MCF 10A (cell line): ENCODE measurements at regions of chr6 and their contacts with region 1.

Region 1: GRCh38 chr6:35688581-35689322 is at the start of gene FKBP5:
- DNase-seq: peak; percentile 91
- H3K4me3 Mint-ChIP-seq: peak within 1 kb of the TSS; percentile 97
- H3K27ac Mint-ChIP-seq: peak within 1 kb of the TSS; percentile 95
- H3K4me1 Mint-ChIP-seq: peaks cover 21% of the 10 kb centered on the region
- H3K27me3 Mint-ChIP-seq: no peaks in the 10 kb centered on the region
- CTCF ChIP-seq: no peak
- total RNA-seq, gene FKBP5: 304 and 387 TPM in 2 replicates

Region 2: DNA sequence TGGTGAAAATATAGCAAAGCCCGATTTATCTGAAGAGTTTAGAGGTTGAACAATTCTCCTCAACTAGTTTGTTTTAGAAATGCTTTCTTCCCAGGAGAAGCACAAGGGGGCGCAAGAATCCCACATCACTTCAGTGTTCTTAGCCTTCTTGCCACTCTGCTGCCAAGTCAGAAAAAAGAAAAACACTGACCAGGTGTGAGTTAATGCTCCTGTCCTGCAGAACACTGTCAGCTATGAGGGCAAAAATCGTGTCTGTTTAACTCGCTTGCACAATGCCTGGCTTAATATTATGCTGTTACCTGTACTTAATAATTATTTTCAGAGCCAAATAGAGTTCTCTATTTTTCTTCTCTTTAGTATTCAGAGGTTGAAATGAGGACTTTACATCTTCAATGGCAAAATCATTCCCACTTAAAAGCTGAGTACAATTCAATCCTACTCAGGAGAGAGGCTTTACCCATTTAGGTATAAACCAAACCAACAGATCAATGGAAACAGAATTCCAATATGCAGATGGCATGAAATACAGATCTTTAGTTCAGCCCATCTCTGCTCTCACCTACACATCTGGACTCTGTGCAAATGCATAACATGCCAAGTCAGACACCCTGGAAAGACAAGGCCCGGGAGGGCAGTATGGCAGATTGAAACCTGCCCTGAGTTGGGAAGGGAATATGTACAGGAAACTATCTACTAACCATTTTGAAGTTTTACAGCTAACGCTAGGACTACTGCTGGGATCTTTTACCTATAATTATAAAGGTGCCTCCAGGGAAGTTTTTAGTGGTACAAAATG is 104.7 kb before region 1 on chr6:
- CTCF ChIA-PET with region 1: interaction called, 3 read pairs
- POLR2A ChIA-PET with region 1: interaction called, 4 read pairs
- intact Hi-C with region 1: loop called (anchors 1 kb)
- DNase-seq: peak; percentile 82
- H3K4me3 Mint-ChIP-seq: no peak overlapping the region
- H3K27ac Mint-ChIP-seq: peak overlapping the region; percentile 75
- H3K4me1 Mint-ChIP-seq: peaks cover 40% of the 10 kb centered on the region
- H3K27me3 Mint-ChIP-seq: no peaks in the 10 kb centered on the region
- CTCF ChIP-seq: peak; percentile 65

Region 3: GRCh38 chr6:35601331-35602132 is 87.2 kb before region 1 on chr6:
- CTCF ChIA-PET with region 1: no interaction called
- POLR2A ChIA-PET with region 1: interaction called, 137 read pairs
- intact Hi-C with region 1: loop called (anchors 5 kb)
- DNase-seq: peak; percentile 92
- H3K4me3 Mint-ChIP-seq: peak overlapping the region; percentile 58
- H3K27ac Mint-ChIP-seq: peak overlapping the region; percentile 96
- H3K4me1 Mint-ChIP-seq: peaks cover 63% of the 10 kb centered on the region
- H3K27me3 Mint-ChIP-seq: no peaks in the 10 kb centered on the region
- CTCF ChIP-seq: no peak

Region 4: DNA sequence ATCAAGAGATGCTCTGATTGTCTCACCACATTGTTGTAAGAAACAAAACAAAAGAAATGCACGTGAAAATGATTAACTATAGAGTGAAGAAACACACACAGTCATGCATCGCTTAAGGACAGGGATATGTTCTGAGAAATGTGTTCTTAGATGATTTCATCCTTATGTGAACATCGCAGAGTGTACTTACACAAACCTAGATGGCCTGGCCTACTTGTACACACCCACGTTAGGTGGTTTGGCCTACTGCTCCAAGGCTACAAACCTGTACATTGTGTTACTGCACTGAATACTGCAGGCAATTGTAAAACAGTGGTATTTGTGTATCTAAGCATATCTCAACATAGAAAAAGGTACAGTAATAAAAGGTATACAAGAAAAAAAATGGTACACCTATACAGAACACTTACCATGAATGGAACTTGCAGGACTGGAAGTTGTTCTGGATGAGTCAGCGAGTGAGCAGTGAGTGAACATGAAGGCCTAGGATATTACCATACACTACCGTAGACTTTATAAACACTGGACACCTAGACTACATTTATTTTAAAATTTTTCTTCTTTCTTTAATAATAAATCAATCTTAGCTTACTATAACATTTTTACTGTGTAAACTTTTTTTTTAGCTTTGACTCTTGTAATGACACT is 48.6 kb before region 1 on chr6:
- CTCF ChIA-PET with region 1: no interaction called
- POLR2A ChIA-PET with region 1: interaction called, 12 read pairs
- intact Hi-C with region 1: no loop called
- DNase-seq: no peak
- H3K4me3 Mint-ChIP-seq: no peak overlapping the region
- H3K27ac Mint-ChIP-seq: peak overlapping the region; percentile 19
- H3K4me1 Mint-ChIP-seq: peaks cover 37% of the 10 kb centered on the region
- H3K27me3 Mint-ChIP-seq: no peaks in the 10 kb centered on the region
- CTCF ChIP-seq: no peak

Region 5: DNA sequence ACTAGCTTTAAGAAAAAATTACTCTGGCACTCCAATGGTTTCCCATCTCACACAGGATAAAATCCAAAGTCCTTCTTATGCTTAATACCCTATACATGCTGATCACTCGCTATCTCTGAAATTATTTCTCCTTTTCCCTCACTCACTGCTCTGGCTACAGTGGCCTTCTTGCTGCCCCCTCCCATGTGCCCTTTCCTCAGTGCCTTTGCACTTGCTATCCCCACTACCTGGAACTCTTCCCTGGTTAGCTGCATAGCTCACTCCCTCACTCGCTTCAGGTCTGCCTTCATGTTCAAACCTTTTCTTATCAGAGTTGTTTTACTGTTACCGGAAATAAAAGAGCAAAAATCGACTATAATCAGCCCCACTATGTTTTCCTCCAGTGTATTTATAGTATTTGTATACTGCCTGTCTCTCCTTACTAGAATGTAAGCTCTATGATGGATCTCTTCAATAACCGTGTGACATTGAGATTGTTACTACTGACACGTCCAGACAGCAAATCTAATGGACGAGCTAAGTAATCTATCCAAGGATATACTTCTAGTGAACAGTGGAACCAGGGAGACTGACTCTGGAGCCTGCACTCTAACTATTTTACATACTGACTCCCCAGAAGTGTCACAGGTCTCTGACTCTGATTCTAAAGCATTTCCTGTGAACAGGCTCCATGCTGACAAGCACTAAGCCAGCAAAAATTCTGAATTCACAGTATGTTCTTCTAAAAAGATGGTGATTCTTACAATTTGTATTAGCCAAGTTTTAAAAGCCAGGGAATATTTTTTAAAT is 25.1 kb before region 1 on chr6:
- CTCF ChIA-PET with region 1: interaction called, 4 read pairs
- POLR2A ChIA-PET with region 1: interaction called, 285 read pairs
- intact Hi-C with region 1: no loop called
- DNase-seq: peak; percentile 29
- H3K4me3 Mint-ChIP-seq: no peak overlapping the region
- H3K27ac Mint-ChIP-seq: no peak overlapping the region
- H3K4me1 Mint-ChIP-seq: peaks cover 10% of the 10 kb centered on the region
- H3K27me3 Mint-ChIP-seq: no peaks in the 10 kb centered on the region
- CTCF ChIP-seq: no peak

Region 6: GRCh38 chr6:35669451-35670045 is 19.2 kb before region 1 on chr6:
- CTCF ChIA-PET with region 1: interaction called, 3 read pairs
- POLR2A ChIA-PET with region 1: interaction called, 285 read pairs
- intact Hi-C with region 1: no loop called
- DNase-seq: no peak
- H3K4me3 Mint-ChIP-seq: peak overlapping the region; percentile 28
- H3K27ac Mint-ChIP-seq: peak overlapping the region; percentile 54
- H3K4me1 Mint-ChIP-seq: peaks cover 26% of the 10 kb centered on the region
- H3K27me3 Mint-ChIP-seq: no peaks in the 10 kb centered on the region
- CTCF ChIP-seq: no peak

Region 7: GRCh38 chr6:35710241-35710847 is 21.6 kb after region 1 on chr6:
- CTCF ChIA-PET with region 1: interaction called, 3 read pairs
- POLR2A ChIA-PET with region 1: interaction called, 32 read pairs
- intact Hi-C with region 1: no loop called
- DNase-seq: peak; percentile 86
- H3K4me3 Mint-ChIP-seq: no peak overlapping the region
- H3K27ac Mint-ChIP-seq: no peak overlapping the region
- H3K4me1 Mint-ChIP-seq: peaks cover 13% of the 10 kb centered on the region
- H3K27me3 Mint-ChIP-seq: no peaks in the 10 kb centered on the region
- CTCF ChIP-seq: no peak

Region 8: GRCh38 chr6:36153972-36154723 is 465.4 kb after region 1 on chr6:
- CTCF ChIA-PET with region 1: no interaction called
- POLR2A ChIA-PET with region 1: no interaction called
- intact Hi-C with region 1: no loop called
- DNase-seq: no peak
- H3K4me3 Mint-ChIP-seq: no peak overlapping the region
- H3K27ac Mint-ChIP-seq: no peak overlapping the region
- H3K4me1 Mint-ChIP-seq: no peaks in the 10 kb centered on the region
- H3K27me3 Mint-ChIP-seq: peaks cover 6% of the 10 kb centered on the region
- CTCF ChIP-seq: no peak